GM12878 (cell line): ENCODE measurements at regions of chr12 and their contacts with region 1.

Region 1: DNA sequence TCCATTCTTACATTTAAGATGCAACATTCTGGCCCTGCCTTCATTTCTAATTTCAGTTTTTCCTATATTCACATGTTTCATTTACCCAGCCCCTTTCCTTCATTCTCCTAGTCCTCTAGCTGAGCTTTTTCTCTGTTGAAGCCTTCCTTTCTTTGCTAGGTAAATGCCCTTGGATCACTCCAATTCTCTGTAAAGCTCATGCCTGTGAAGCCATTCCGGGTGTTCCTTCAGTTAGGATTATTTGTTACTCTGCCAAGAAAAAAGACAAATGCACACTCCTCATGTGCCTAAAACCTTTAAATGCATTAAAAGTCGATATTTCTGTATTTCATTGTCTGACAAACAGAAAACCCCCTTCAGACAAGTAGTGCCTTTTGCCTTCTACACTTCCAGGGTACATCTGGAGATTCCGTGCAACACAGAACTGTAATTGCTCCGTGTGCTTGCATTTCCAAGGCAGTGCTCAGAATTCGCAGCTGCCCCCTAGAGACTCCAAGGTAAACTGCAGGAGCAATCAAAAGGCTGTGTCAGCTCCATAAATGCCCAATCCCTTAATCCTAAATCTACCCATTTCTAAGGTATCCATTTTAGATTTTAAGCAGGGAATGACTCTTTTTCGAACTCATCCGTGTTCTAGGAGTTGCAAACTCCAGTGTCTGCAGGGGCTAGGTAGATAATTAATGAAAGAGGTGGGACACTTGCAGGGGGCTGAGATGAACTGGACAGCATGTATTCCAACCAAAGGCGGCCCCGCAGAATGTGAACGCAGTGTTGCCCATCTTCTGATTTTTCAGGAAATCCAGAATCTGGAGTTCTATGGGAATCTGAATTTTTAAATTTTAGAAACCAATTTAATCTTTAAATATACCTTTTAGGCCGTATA is 320.2 kb downstream of the GRIN2B start:
- DNase-seq: peak; percentile 3
- ATAC-seq: peak; percentile 93
- H3K4me3 ChIP-seq: no peak overlapping the region
- H3K27ac ChIP-seq: no peak overlapping the region
- H3K4me1 ChIP-seq: no peaks in the 10 kb centered on the region
- H3K27me3 ChIP-seq: 0 out of 4 replicates have a peak, but pooled peaks cover 0 to 4% of the 10 kb centered on the region in 2 experiments
- CTCF ChIP-seq: peak; percentile 82 to 88 (median 83)
- EP300 ChIP-seq: no peak
- POLR2A ChIP-seq: no peak
- RAD21 ChIP-seq: peak; percentile 80

Region 2: DNA sequence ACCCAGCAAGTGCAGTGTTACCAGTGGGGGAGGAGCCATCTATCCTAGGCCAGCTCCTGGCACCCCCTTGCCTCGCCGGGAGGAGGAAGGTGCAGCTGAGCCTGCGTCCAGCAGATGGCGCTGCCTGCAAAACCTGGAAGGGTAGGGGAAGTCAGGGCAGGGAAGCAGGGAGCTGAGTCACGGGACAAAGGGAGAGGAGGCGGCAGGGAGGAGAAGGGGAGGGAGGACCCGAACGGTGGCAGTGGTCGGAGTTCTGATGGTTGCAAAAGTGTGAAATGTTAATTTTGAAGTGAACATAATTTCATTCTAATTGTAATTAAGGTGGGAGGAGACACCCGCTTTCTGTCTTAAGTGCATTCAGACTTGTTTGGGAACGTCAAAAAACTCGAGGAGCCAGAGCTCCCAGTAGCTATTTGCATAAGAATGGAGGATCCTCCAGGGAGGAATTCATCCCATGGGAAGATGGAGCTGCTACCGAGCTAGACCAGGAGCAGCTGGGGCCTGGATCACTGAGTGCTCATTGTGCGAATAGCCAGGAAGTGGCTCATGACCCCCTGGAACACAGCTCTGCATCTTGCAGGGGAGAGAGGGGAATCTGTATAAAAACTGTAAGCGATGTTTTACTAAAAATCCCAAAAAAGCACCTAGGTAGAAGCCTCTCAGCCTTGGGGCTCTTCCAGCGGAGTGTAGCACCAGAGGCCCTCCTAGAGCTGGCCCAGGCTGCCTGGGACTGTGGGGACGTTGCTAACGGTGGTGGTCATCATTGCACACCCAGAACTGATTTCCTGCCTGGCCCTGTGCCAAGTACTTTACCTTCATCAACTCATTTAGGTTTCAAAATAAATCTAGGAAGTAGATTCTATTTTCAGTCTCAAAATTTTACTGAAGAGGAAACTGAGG is 405.2 kb before region 1 on chr12:
- CTCF ChIA-PET with region 1: interaction called, 19 read pairs
- POLR2A ChIA-PET with region 1: no interaction called
- RAD21 ChIA-PET with region 1: interaction called, 5 read pairs
- SMC1A ChIA-PET with region 1: interaction called, 10 read pairs
- in situ Hi-C with region 1: no loop called
- intact Hi-C with region 1: loop called (anchors 5 kb)
- DNase-seq: peak; percentile 28
- ATAC-seq: peak; percentile 100
- H3K4me3 ChIP-seq: no peak overlapping the region
- H3K27ac ChIP-seq: no peak overlapping the region
- H3K4me1 ChIP-seq: no peaks in the 10 kb centered on the region
- H3K27me3 ChIP-seq: 0 out of 4 replicates have a peak, but pooled peaks cover 1 to 5% of the 10 kb centered on the region in 2 experiments
- CTCF ChIP-seq: peak; percentile 89 to 98 (median 94)
- EP300 ChIP-seq: no peak
- POLR2A ChIP-seq: no peak
- RAD21 ChIP-seq: peak; percentile 65

Region 3: GRCh38 chr12:13278249-13278787 is 382.9 kb before region 1 on chr12:
- CTCF ChIA-PET with region 1: interaction called, 5 read pairs
- POLR2A ChIA-PET with region 1: no interaction called
- RAD21 ChIA-PET with region 1: no interaction called
- SMC1A ChIA-PET with region 1: interaction called, 3 read pairs
- in situ Hi-C with region 1: no loop called
- intact Hi-C with region 1: loop called (anchors 1 kb)
- DNase-seq: no peak
- ATAC-seq: peak; percentile 93
- H3K4me3 ChIP-seq: no peak overlapping the region
- H3K27ac ChIP-seq: no peak overlapping the region
- H3K4me1 ChIP-seq: no peaks in the 10 kb centered on the region
- H3K27me3 ChIP-seq: peaks cover 0 to 7% of the 10 kb centered on the region in 2 experiments; a peak in 2 of 4 replicates
- CTCF ChIP-seq: peak; percentile 68 to 85 (median 75)
- EP300 ChIP-seq: no peak
- POLR2A ChIP-seq: no peak
- RAD21 ChIP-seq: peak; percentile 41

Region 4: DNA sequence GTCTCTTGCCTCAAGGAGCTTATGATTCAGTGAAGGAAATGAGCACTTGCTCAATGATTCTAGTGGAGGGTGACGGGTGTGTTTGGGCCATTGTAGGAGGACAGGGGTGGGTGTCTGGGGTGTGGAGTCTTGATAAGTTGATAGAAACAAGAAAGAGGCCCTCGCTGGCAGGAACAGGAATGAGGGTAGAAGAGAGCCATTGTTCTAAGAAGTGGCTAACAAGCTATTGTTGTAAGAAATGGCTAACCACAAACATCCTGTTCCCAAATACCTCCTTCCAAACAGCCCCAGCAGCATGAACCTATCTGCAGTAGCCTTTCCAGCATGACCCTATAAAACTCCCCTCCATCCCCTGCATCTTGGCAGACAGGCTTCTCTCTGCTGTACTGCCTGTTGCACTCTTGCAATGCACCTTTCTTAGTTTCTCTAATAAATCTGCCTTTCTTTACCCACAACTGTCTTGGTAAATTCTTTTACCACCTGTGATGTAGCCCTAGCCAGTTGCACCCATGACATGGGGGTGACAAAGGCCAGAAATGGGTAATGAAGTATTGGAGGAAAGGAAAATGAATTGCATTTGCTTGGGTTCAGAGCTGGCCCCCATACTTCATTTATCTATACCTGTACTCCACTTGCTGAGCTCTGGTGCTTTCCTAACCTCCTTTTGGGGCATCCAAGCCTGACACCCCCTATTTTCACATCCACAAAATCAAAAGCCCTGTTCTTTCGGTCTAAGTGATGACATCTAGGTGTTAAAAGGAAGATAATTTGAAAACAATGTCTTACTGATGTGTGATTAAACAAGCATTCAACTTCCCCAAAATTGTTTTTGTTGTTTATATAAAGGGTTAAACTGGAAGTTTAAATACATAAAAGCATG is 68.9 kb before region 1 on chr12:
- CTCF ChIA-PET with region 1: interaction called, 10 read pairs
- POLR2A ChIA-PET with region 1: interaction called, 4 read pairs
- RAD21 ChIA-PET with region 1: interaction called, 5 read pairs
- SMC1A ChIA-PET with region 1: interaction called, 19 read pairs
- in situ Hi-C with region 1: no loop called
- intact Hi-C with region 1: loop called (anchors 2 kb)
- DNase-seq: peak; percentile 51
- ATAC-seq: peak; percentile 86
- H3K4me3 ChIP-seq: no peak overlapping the region
- H3K27ac ChIP-seq: no peak overlapping the region; the same call in 1 of the 2 replicates
- H3K4me1 ChIP-seq: no peaks in the 10 kb centered on the region; the same call in 1 of the 2 replicates
- H3K27me3 ChIP-seq: no peaks in the 10 kb centered on the region
- CTCF ChIP-seq: no peak
- EP300 ChIP-seq: peak; percentile 72 to 81; a peak in 3 of 4 replicates
- POLR2A ChIP-seq: no peak
- RAD21 ChIP-seq: no peak

Region 5: GRCh38 chr12:13602172-13602571 is 59.1 kb before region 1 on chr12:
- CTCF ChIA-PET with region 1: interaction called, 11 read pairs
- POLR2A ChIA-PET with region 1: no interaction called
- RAD21 ChIA-PET with region 1: no interaction called
- SMC1A ChIA-PET with region 1: interaction called, 3 read pairs
- in situ Hi-C with region 1: no loop called
- intact Hi-C with region 1: no loop called
- DNase-seq: no peak
- ATAC-seq: no peak
- H3K4me3 ChIP-seq: no peak overlapping the region
- H3K27ac ChIP-seq: no peak overlapping the region
- H3K4me1 ChIP-seq: no peaks in the 10 kb centered on the region
- H3K27me3 ChIP-seq: no peaks in the 10 kb centered on the region
- CTCF ChIP-seq: no peak
- EP300 ChIP-seq: no peak
- POLR2A ChIP-seq: no peak
- RAD21 ChIP-seq: no peak